Ascending aorta (tissue), 2 donors: ENCODE measurements at regions of chr1 and their contacts with region 1.

Region 1: DNA sequence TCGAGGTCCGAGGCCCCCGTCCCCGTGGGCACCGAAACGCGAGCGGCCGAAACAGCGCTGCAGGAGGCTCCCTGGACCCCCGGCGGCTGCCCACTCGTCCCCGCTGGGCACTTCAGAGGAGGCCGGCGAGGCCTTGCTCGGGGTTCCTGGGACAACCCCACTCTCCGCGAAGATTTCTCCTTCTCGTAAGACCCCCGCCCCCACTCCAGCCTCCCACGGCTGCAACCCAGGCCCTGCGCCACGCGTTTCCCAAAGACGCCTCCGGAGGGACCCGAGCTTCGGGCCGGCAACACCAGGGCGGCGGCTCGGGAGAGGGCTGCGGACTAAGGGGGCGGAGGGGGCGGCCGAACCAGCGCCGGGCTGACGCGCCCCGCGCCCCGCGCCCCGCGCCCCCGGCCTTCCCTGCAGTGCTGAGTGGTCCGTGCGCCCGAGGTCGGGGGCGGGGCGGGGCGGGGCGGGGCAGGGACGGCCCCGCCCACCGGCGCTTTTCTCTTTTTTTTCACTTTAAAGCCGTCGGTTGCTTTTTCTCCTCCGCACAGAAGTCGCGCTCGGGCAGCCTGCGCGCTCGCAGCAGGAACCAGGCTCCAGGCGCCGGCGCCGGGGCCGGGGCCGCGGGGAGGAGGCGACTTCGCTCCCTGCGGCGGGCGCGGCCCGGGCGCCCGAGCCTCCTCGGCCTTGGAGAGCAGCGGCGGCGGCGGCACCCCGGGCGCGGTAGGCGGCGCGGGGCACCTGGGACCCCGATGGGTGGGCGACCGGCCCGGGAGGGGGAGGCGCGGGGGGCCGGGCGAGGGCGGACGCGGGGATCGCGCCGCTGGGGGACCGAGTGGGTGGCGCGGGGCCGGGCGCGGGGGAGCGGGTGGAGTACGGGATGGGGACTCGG is at the start of gene SPSB1:
- DNase-seq: peak in 1 of 2 donors; percentile 82
- H3K4me3 ChIP-seq: peak within 1 kb of the TSS; percentile 89 to 95
- H3K27ac ChIP-seq: peak within 1 kb of the TSS; percentile 82 to 98
- H3K4me1 ChIP-seq: peaks cover 8 to 29% of the 10 kb centered on the region in 2 donors
- H3K27me3 ChIP-seq: no peaks in the 10 kb centered on the region
- CTCF ChIP-seq: no peak
- total RNA-seq, gene SPSB1: 64.9 TPM

Region 2: GRCh38 chr1:9234223-9235095 is 58.1 kb before region 1 on chr1 and contains the start of gene H6PD:
- intact Hi-C with region 1: loop called (anchors 5 kb)
- DNase-seq: peak; percentile 45 to 91
- H3K4me3 ChIP-seq: peak within 1 kb of the TSS; percentile 68 to 73
- H3K27ac ChIP-seq: peak within 1 kb of the TSS; percentile 93 to 97
- H3K4me1 ChIP-seq: peaks cover 8 to 46% of the 10 kb centered on the region in 2 donors
- H3K27me3 ChIP-seq: no peaks in the 10 kb centered on the region
- CTCF ChIP-seq: peak; percentile 72 to 96 (median 79)
- total RNA-seq, gene H6PD: 56.8 TPM

Region 3: DNA sequence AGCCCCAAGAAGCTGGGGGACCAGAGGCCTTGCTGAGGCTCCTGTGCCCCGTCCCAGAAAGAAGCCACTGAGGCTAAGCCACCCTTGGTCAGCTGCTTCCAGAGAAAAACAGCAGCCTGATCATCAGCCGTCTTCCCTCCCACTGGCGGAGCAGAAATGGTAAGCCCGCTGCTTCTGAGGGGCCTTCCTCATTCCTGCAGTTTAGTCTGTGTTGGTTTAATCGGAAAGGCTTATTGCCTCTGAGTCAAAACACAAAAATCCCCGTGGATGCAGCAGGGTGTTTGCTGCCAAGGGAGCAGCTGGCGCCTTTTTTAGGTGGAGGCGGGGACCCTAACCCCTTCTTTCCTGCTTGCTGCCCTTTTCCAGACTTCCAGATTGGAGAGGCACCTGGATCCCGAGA is 34.0 kb after region 1 on chr1:
- intact Hi-C with region 1: loop called (anchors 2 kb)
- DNase-seq: peak in 1 of 2 donors; percentile 80
- H3K4me3 ChIP-seq: peak overlapping the region in 1 of 2 donors; percentile 28
- H3K27ac ChIP-seq: peak overlapping the region; percentile 82 to 95
- H3K4me1 ChIP-seq: peaks cover 30 to 58% of the 10 kb centered on the region in 2 donors
- H3K27me3 ChIP-seq: no peaks in the 10 kb centered on the region
- CTCF ChIP-seq: no peak

Region 4: DNA sequence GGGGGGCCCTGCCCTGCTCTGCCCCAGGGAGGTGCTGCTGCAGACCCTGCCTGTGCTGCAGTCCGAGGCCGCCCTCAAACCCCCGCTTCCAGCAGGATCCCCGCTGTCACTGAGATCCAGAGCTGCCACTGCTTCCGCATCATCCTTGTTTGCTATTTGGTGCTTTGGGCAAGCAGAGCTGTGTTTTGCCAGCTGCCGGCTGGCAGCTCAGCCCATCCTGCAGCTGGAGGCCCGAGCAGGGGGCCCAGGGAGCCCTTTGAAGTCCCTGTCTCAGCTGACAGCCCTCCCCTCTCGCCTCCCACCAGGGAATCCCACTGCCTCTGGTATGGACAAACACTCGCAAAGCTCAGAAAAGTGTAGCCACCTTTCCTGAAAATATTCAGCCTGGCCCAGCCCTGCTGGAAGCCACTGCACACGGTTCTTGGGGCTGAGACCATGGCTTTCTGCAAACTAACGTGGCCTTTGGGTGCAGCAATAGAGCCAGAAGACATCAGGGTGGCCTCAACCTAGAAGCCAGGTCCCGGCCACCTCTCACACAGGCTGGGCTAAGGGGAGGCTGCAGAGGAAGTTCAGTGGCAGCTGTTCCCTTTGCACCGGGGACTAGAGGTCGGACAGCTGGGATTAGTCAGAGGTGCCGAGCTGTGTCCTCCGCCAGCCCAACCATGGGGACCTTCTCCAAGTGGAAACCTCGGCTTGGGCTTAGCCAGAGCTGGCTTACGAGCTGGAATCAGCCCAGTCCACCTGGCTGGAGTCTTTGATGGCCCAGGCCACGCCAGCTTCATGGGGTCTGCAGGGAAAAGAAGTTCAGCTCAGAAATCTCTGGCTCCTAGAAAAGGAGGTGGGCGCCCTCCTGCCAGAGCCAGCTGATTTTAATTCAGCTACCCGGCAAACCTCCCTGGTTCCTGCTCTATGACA is 107.2 kb after region 1 on chr1:
- intact Hi-C with region 1: loop called (anchors 2 kb)
- DNase-seq: peak in 1 of 2 donors; percentile 82
- H3K4me3 ChIP-seq: no peak overlapping the region
- H3K27ac ChIP-seq: peak overlapping the region; percentile 87 to 93
- H3K4me1 ChIP-seq: peaks cover 34 to 55% of the 10 kb centered on the region in 2 donors
- H3K27me3 ChIP-seq: no peaks in the 10 kb centered on the region
- CTCF ChIP-seq: no peak

Region 5: GRCh38 chr1:9455487-9456234 is 163.1 kb after region 1 on chr1:
- intact Hi-C with region 1: loop called (anchors 2 kb)
- DNase-seq: no peak
- H3K4me3 ChIP-seq: no peak overlapping the region
- H3K27ac ChIP-seq: no peak overlapping the region
- H3K4me1 ChIP-seq: peaks cover 0 to 10% of the 10 kb centered on the region in 2 donors
- H3K27me3 ChIP-seq: no peaks in the 10 kb centered on the region
- CTCF ChIP-seq: peak; percentile 76 to 89 (median 84)